ENCODE measurements at regions of chr2 and their contacts with region 1.

Region 1: DNA sequence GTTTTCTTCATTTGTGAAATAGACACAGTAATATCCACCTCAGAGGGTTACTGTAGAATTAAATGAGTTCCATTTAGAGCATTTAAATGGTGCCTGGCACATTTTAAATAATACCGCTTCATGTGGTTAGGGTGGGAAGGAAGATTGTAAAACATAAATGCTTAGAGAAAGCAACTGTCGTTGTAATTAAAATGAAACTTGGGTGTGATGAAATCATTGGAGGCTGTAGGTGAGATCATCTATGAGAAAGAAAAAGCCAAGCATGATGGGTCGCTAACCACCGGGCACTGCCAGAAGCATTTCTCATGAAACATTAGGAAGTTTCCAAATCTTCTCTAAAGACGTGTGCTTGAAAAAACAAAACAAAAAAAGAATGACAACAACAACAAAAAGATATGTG is 8.2 kb upstream of the SLC39A10 start:
- DNase-seq: peak in 1 of 35 experiments; percentile 46
- ATAC-seq: peak in 3 of 4 experiments; percentile 20 to 67 (median 62)
- H3K4me3 ChIP-seq: no peak overlapping the region
- H3K4me3 Mint-ChIP-seq: peak overlapping the region; percentile 44 to 63 (median 46)
- H3K27ac ChIP-seq: peak overlapping the region; percentile 43
- H3K27ac Mint-ChIP-seq: peak overlapping the region; percentile 30 to 69
- H3K4me1 ChIP-seq: peaks cover 3 to 9% of the 10 kb centered on the region in 2 experiments
- H3K4me1 Mint-ChIP-seq: peaks cover 20 to 30% (median 26%) of the 10 kb centered on the region in 3 donors
- H3K27me3 ChIP-seq: no peaks in the 10 kb centered on the region
- H3K27me3 Mint-ChIP-seq: no peaks in the 10 kb centered on the region

Region 2: GRCh38 chr2:195602687-195603086 is 46.1 kb before region 1 on chr2:
- CTCF ChIA-PET with region 1: interaction called in 1 of 2 experiments, 12 read pairs
- POLR2A ChIA-PET with region 1: no interaction called
- DNase-seq: peak in 1 of 35 experiments; percentile 6
- ATAC-seq: no peak
- H3K4me3 ChIP-seq: no peak overlapping the region
- H3K4me3 Mint-ChIP-seq: no peak overlapping the region
- H3K27ac ChIP-seq: no peak overlapping the region
- H3K27ac Mint-ChIP-seq: no peak overlapping the region
- H3K4me1 ChIP-seq: no peaks in the 10 kb centered on the region
- H3K4me1 Mint-ChIP-seq: peaks cover 4 to 12% (median 11%) of the 10 kb centered on the region in 3 donors
- H3K27me3 ChIP-seq: no peaks in the 10 kb centered on the region
- H3K27me3 Mint-ChIP-seq: no peaks in the 10 kb centered on the region

Region 3: GRCh38 chr2:196046123-196046917 is 397.5 kb after region 1 on chr2:
- CTCF ChIA-PET with region 1: no interaction called
- POLR2A ChIA-PET with region 1: no interaction called
- DNase-seq: no peak
- ATAC-seq: no peak
- H3K4me3 ChIP-seq: no peak overlapping the region
- H3K4me3 Mint-ChIP-seq: no peak overlapping the region
- H3K27ac ChIP-seq: no peak overlapping the region
- H3K27ac Mint-ChIP-seq: no peak overlapping the region
- H3K4me1 ChIP-seq: no peaks in the 10 kb centered on the region
- H3K4me1 Mint-ChIP-seq: no peaks in the 10 kb centered on the region
- H3K27me3 ChIP-seq: no peaks in the 10 kb centered on the region
- H3K27me3 Mint-ChIP-seq: peaks cover 8 to 9% of the 10 kb centered on the region in 2 donors